Colonic mucosa (tissue), 4 donors: ENCODE measurements at regions of chr6 and their contacts with region 1.

Region 1: GRCh38 chr6:150392452-150393220 is 23.8 kb downstream of the IYD start:
- DNase-seq: no peak
- H3K4me3 ChIP-seq: no peak overlapping the region
- H3K27ac ChIP-seq: no peak overlapping the region
- H3K4me1 ChIP-seq: no peaks in the 10 kb centered on the region
- H3K27me3 ChIP-seq: no peaks in the 10 kb centered on the region
- CTCF ChIP-seq: no peak

Region 2: GRCh38 chr6:150088481-150089154 is 304.0 kb before region 1 on chr6:
- intact Hi-C with region 1: loop called (anchors 5 kb)
- DNase-seq: no peak
- H3K4me3 ChIP-seq: no peak overlapping the region
- H3K27ac ChIP-seq: no peak overlapping the region
- H3K4me1 ChIP-seq: no peaks in the 10 kb centered on the region
- H3K27me3 ChIP-seq: no peaks in the 10 kb centered on the region
- CTCF ChIP-seq: no peak

Region 3: DNA sequence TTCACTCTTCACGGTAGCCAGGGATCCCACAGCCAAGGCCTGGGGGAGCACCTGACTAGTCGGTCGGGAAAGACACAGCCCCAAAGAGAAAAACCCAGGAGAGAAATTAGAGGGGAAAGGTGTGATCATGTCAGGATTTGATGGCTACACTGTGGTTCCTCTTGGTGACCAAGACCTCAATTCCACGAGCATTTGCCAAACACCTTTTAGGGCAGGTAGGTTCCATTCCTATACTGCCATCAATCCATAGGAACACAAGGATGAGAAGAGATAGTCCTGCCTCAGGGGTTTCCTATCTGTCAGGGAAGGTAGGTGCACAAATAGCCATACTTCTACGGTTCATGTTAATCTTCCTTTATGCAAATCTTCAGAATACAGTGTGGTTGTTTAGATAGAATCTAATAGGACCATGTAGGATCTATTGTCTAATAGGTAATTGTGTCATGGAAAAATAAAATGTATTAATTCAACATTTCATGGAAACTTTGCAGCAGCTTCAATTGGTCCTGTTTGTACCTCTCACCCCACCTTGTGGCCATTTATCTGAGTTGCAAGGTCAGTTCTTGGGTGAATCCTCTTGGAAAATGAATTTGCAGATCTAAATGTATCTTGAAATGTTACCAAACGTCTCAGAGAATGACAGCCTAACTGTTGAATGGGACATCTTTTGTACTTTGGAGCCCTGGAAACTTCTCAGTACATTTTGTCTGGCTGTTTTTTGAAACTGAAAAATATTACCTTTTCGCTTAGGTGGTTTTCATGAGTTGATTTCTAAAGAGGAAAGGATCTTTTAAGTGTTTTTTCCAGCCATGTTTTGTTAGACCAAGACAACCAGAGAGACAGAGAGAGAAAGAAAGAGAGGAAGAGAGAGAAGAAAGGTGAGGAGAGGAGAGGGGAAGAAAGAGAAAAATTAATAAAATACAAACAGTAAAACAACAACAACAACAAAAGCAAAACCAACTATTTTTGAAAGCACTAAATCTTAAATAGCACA is 57.5 kb before region 1 on chr6:
- intact Hi-C with region 1: loop called (anchors 5 kb)
- DNase-seq: peak; percentile 64
- H3K4me3 ChIP-seq: no peak overlapping the region
- H3K27ac ChIP-seq: no peak overlapping the region
- H3K4me1 ChIP-seq: no peaks in the 10 kb centered on the region
- H3K27me3 ChIP-seq: no peaks in the 10 kb centered on the region
- CTCF ChIP-seq: peak; percentile 81